B cell (primary cell): ENCODE measurements at regions of chr5 and their contacts with region 1.

Region 1: GRCh38 chr5:36279054-36279698 is 22.5 kb downstream of the RANBP3L start:
- DNase-seq: no peak
- ATAC-seq: no peak
- H3K4me3 ChIP-seq: no peak overlapping the region
- H3K4me3 Mint-ChIP-seq: no peak overlapping the region
- H3K27ac ChIP-seq: no peak overlapping the region
- H3K27ac Mint-ChIP-seq: no peak overlapping the region
- H3K4me1 ChIP-seq: peaks cover 0 to 3% of the 10 kb centered on the region in 2 donors
- H3K4me1 Mint-ChIP-seq: peaks cover 4% of the 10 kb centered on the region
- H3K27me3 ChIP-seq: no peaks in the 10 kb centered on the region
- H3K27me3 Mint-ChIP-seq: peaks cover 3% of the 10 kb centered on the region
- CTCF ChIP-seq: no peak

Region 2: GRCh38 chr5:36252722-36253365 is 26.3 kb before region 1 on chr5:
- CTCF ChIA-PET with region 1: no interaction called
- POLR2A ChIA-PET with region 1: no interaction called
- intact Hi-C with region 1: no loop called
- DNase-seq: no peak
- ATAC-seq: no peak
- H3K4me3 ChIP-seq: no peak overlapping the region
- H3K4me3 Mint-ChIP-seq: no peak overlapping the region
- H3K27ac ChIP-seq: no peak overlapping the region
- H3K27ac Mint-ChIP-seq: no peak overlapping the region
- H3K4me1 ChIP-seq: no peaks in the 10 kb centered on the region
- H3K4me1 Mint-ChIP-seq: no peaks in the 10 kb centered on the region
- H3K27me3 ChIP-seq: no peaks in the 10 kb centered on the region
- H3K27me3 Mint-ChIP-seq: peaks cover 3% of the 10 kb centered on the region
- CTCF ChIP-seq: no peak

Region 3: DNA sequence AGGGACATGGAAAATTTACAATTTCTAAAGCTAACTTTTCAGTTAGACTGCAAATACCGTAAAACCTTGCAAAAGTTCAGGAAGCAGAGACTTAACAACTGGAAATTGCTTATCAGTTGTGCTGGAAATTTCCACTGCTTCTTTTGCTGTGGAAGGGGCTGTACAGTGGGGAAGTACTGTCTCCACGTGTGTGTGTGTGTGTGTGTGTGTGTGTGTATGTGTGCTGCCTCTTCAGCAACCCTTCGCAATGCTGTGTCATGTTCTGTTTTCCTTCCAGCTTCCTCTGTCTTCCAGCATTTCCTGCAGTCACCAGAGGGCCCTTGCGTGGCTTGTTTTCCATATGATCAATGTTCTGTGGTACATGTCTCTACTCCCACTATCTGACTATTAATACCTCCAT is 110.1 kb after region 1 on chr5:
- CTCF ChIA-PET with region 1: no interaction called
- POLR2A ChIA-PET with region 1: no interaction called
- intact Hi-C with region 1: loop called (anchors 10 kb)
- DNase-seq: no peak
- ATAC-seq: no peak
- H3K4me3 ChIP-seq: no peak overlapping the region
- H3K4me3 Mint-ChIP-seq: no peak overlapping the region
- H3K27ac ChIP-seq: no peak overlapping the region
- H3K27ac Mint-ChIP-seq: no peak overlapping the region
- H3K4me1 ChIP-seq: peaks cover 3 to 8% of the 10 kb centered on the region in 2 donors
- H3K4me1 Mint-ChIP-seq: peaks cover 8% of the 10 kb centered on the region
- H3K27me3 ChIP-seq: no peaks in the 10 kb centered on the region
- H3K27me3 Mint-ChIP-seq: peaks cover 8% of the 10 kb centered on the region
- CTCF ChIP-seq: no peak

Region 4: DNA sequence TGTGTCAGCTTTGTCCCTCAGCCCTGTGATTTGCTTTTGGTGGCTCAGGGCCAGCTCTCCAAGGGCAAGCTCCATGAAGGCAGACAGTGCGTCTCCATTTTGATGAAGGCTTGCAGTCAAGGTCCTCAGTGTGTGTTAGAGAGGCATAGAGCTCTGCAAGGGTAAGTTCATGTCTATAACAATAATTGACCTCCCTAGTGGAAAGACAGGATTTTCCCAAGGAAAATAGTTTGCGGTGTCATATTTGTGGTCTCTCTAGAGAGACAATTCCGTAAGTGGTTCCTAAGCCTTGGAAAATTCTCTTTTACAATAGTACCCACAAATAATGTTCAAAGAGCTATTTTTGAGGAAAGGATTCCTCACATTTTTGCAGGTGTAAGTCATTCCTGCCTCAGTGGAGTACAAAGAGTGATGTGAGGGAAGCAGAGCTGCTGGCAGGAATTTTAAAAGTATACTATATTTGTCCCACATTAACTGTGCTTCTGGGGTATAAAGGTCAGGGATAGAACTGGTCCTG is 367.4 kb after region 1 on chr5:
- CTCF ChIA-PET with region 1: no interaction called
- POLR2A ChIA-PET with region 1: no interaction called
- intact Hi-C with region 1: no loop called
- DNase-seq: no peak
- ATAC-seq: no peak
- H3K4me3 ChIP-seq: no peak overlapping the region
- H3K4me3 Mint-ChIP-seq: no peak overlapping the region
- H3K27ac ChIP-seq: no peak overlapping the region
- H3K27ac Mint-ChIP-seq: no peak overlapping the region
- H3K4me1 ChIP-seq: no peaks in the 10 kb centered on the region
- H3K4me1 Mint-ChIP-seq: no peaks in the 10 kb centered on the region
- H3K27me3 ChIP-seq: peaks cover 0 to 3% (median 0%) of the 10 kb centered on the region in 4 experiments
- H3K27me3 Mint-ChIP-seq: peaks cover 25% of the 10 kb centered on the region
- CTCF ChIP-seq: no peak